Right ventricle myocardium inferior (tissue), 1 donor: ENCODE measurements at regions of chr2 and their contacts with region 1.

Region 1: GRCh38 chr2:8761529-8762164 is 75.8 kb downstream of the KIDINS220 start:
- DNase-seq: no peak
- ATAC-seq: no peak

Region 2: DNA sequence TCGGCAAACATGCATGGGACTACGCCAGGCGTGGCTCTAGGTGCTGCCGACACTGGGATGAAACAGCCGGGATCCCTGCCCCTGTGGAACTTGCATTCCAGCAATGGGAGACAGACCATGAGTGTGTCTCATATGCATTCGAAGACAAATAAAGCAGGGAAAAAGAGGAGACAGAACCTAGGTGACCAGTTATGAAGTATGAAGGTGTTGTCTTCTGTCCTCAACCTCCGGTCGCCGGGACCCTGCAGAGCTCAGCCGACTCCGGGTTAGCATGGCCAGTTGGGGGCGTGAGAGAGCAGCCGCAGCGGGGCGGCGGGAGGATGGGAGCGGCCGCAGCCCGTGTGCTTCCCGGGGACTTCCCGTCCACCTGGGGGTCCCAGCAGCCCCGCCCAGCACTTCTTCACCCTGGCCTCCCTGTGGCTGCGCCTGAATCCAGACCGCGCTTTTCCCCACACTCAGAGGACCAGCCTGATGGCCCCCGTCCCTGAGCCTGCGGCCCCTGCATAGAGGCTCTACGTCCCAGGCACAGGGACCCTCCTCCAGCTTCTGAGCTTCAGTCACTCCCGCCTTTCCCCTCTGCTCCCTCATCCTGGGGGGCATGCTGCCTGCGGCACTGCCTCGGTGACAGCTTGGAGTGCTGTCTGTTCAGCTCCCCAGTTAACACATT is 68.4 kb before region 1 on chr2:
- intact Hi-C with region 1: loop called (anchors 5 kb)
- DNase-seq: no peak
- ATAC-seq: peak; percentile 76

Region 3: DNA sequence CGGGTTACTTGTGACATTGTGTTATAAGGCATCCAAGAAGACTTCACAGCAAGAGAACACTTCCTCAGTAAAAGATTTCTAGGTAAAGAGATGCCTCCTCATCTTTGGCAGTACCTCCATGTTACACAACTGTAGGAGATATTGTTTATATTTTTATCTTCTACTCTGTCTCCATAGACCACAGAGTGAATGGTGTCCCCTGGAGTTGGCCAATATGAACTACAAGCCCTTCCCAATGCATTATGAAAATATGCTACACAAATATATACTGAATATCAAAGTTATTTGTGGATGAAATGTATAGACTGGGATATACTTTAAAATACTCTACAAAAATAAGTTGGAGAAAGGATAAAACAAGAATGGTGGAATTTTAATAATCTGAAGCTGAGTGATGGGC is 195.1 kb after region 1 on chr2:
- intact Hi-C with region 1: no loop called
- DNase-seq: no peak
- ATAC-seq: no peak

Region 4: DNA sequence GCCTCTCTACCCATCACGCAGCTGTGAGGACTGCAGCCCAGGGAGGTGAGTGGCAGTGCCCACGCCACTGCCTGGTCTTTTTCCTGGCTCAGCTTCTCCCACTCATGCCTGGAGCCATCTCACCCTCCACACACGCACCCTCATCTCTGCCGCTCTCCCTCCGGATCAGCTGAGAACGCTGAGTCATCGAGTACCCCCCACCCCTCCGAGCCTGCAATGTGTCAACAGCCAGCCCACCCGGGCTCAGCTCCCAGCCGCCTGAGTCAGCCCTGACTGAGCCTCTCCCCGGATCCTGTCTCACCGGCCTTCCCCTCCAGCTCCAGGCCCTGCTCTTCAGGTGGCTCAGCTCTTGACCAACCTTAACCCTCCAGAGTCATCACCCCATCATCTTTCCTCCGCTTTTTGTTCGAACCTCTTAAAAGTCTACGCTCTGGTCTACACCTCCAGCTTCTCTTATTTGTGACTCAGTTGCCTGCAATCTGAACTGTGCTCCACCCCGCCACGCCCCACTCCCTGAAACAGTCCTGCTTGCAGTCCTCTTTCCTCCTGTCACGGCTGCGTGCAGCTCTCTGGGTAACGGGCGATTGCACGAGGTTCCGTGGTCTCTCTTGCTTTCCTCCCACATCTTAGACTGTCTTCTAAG is 350.6 kb after region 1 on chr2:
- intact Hi-C with region 1: no loop called
- DNase-seq: no peak
- ATAC-seq: no peak